ENCODE measurements at regions of chr19 and their contacts with region 1.

Region 1: DNA sequence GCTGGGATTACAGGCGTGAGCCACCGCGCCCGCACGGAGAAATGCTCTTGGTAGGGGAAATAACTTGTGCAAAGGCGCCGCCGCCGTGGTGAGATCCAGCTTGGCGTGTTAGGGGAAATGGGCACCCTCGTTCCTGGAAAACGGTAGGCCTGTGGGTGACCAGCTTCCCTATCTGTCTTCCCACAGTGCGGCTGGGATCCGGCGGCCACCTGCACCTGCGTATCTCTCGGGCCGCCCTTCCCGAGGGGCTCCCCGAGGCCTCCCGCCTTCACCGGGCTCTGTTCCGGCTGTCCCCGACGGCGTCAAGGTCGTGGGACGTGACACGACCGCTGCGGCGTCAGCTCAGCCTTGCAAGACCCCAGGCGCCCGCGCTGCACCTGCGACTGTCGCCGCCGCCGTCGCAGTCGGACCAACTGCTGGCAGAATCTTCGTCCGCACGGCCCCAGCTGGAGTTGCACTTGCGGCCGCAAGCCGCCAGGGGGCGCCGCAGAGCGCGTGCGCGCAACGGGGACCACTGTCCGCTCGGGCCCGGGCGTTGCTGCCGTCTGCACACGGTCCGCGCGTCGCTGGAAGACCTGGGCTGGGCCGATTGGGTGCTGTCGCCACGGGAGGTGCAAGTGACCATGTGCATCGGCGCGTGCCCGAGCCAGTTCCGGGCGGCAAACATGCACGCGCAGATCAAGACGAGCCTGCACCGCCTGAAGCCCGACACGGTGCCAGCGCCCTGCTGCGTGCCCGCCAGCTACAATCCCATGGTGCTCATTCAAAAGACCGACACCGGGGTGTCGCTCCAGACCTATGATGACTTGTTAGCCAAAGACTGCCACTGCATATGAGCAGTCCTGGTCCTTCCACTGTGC is 2.4 kb downstream of the GDF15 start:
- DNase-seq: peak; percentile 92 to 96
- ATAC-seq: peak; percentile 90
- H3K4me3 ChIP-seq: no peak overlapping the region
- H3K27ac ChIP-seq: no peak overlapping the region
- H3K4me1 ChIP-seq: no peaks in the 10 kb centered on the region
- H3K27me3 ChIP-seq: peaks cover 0 to 2% of the 10 kb centered on the region in 2 donors

Region 2: GRCh38 chr19:18214779-18215433 is 173.4 kb before region 1 on chr19:
- intact Hi-C with region 1: no loop called
- DNase-seq: no peak
- ATAC-seq: no peak
- H3K4me3 ChIP-seq: no peak overlapping the region
- H3K27ac ChIP-seq: no peak overlapping the region
- H3K4me1 ChIP-seq: no peaks in the 10 kb centered on the region
- H3K27me3 ChIP-seq: no peaks in the 10 kb centered on the region

Region 3: GRCh38 chr19:18291590-18292461 is 96.5 kb before region 1 on chr19:
- intact Hi-C with region 1: no loop called
- DNase-seq: peak; percentile 95 to 97
- ATAC-seq: peak; percentile 89
- H3K4me3 ChIP-seq: peak overlapping the region; percentile 63 to 66
- H3K27ac ChIP-seq: peak overlapping the region; percentile 94 to 95
- H3K4me1 ChIP-seq: no peaks in the 10 kb centered on the region
- H3K27me3 ChIP-seq: no peaks in the 10 kb centered on the region

Region 4: DNA sequence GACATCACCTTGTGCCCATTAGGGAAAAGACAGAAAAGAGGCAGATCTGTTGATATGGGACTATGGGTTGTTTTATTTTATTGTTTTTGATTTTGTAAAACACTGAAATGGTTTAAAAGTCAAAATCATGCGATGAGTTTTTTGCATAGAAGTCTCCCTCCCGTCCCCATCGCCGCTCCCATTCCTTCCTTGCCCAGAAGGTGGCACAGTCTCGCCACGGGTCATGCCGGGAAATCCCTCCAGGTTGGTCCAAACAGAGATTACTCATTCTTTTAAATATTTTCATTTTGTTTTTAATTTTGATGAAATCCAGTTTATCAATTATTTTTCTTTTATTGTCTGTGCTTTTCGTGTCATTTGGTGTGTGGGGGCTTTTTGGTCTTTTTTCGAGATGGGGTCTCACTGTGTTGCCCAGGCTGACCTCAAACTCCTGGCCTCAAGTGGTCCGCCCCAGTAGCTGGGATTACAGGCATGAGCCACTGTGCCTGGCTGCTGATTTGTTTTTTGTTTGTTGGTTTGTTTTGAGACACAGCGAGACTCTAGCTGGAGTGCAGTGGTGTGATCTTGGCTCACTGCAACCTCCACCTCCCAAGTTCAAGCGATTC is 38.7 kb before region 1 on chr19:
- intact Hi-C with region 1: loop called in 1 of 2 experiments (anchors 5 kb)
- DNase-seq: peak; percentile 73 to 86
- ATAC-seq: no peak
- H3K4me3 ChIP-seq: no peak overlapping the region
- H3K27ac ChIP-seq: no peak overlapping the region
- H3K4me1 ChIP-seq: no peaks in the 10 kb centered on the region
- H3K27me3 ChIP-seq: no peaks in the 10 kb centered on the region

Region 5: DNA sequence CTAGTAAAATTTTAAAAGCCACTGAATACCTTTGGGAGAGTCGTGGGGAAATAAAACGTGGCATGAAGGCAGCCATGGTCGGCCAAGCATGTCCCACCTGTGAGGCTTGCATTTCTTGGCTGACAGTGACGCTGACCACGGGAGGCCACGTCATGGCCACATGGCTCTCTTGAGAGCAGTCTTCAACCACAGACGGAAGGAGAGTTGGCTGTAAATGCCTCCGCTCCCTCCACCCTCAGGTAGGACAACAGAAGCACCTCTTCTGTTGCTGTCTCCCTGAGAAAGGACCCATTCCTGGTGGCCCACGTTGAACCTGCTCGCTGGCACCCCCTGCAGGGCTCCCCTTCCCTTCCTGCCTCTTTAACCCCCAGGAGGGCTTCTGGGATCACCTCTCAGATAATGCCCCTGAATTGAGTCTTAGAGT is 19.7 kb after region 1 on chr19:
- intact Hi-C with region 1: loop called in 1 of 2 experiments (anchors 2 kb)
- DNase-seq: no peak
- ATAC-seq: no peak
- H3K4me3 ChIP-seq: no peak overlapping the region
- H3K27ac ChIP-seq: no peak overlapping the region
- H3K4me1 ChIP-seq: no peaks in the 10 kb centered on the region
- H3K27me3 ChIP-seq: no peaks in the 10 kb centered on the region

Region 6: GRCh38 chr19:18464646-18465045 is 76.3 kb after region 1 on chr19:
- intact Hi-C with region 1: no loop called
- DNase-seq: peak; percentile 86 to 91
- ATAC-seq: peak; percentile 75
- H3K4me3 ChIP-seq: no peak overlapping the region
- H3K27ac ChIP-seq: peak overlapping the region; percentile 16 to 78
- H3K4me1 ChIP-seq: no peaks in the 10 kb centered on the region
- H3K27me3 ChIP-seq: no peaks in the 10 kb centered on the region

Region 7: DNA sequence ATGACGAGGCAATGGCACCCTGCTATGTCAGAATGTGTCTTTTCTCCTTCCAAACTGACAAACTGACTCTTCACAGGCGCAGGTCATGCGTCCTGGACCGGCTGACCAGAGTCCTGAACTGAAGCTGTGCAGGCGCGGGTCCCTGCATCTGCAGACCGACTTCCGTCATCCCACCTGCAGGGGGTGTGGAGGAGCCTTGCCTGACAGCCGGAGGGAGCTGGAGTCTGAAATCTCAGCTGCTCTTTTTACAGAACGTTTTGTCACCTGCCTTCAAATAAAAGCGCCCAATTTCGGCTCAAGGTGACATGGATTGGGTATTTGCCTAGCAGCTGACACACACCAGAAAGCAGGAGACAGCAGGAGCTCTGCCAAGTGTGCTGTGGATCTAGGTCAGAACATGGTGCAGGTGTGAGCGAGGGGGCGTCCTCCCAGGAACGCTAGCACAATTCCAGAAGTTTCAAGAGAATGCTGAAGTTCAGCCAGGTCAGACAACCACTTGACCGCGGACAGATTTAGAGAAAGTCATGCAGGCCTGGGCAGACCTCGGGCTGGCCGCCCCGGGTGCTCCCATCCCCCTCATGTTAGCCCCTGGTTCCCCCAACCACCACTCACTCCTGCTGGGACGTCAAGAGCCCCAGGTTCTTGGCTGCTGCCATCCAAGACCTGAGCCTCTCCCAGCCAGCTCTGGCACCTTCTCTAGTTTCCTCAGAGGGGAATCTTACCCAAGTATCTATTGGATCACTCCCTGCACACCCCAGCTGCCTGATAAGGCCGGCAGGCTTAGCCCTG is 100.7 kb after region 1 on chr19:
- intact Hi-C with region 1: no loop called
- DNase-seq: no peak
- ATAC-seq: no peak
- H3K4me3 ChIP-seq: no peak overlapping the region
- H3K27ac ChIP-seq: no peak overlapping the region
- H3K4me1 ChIP-seq: no peaks in the 10 kb centered on the region
- H3K27me3 ChIP-seq: no peaks in the 10 kb centered on the region

Measured in aorta (tissue), 5 donors.